ENCODE measurements at regions of chr3 and their contacts with region 1.

Region 1: DNA sequence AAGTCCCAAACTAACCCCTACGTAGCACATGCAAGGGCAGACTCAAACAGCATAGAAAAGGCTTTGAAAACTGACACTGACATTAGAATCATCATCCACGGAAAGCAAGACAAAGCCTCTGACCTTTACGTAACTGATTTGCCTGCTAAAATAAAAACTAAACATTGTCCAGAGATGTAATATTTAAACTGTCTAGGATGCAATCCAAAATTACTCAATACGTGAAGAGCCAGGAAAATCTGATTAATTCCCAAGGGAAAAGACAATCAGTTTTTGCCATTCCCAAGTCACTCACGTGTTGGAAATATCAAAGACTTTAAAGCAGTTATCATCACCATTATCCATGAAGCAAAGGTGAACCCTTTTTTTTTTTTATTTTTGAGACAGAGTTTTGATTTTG is 13.3 kb upstream of the IQCF1 start:
- DNase-seq: no peak
- ATAC-seq: no peak
- H3K4me3 Mint-ChIP-seq: no peak overlapping the region
- H3K27ac Mint-ChIP-seq: no peak overlapping the region
- H3K4me1 Mint-ChIP-seq: no peaks in the 10 kb centered on the region
- H3K27me3 Mint-ChIP-seq: peaks cover 6% of the 10 kb centered on the region

Region 2: DNA sequence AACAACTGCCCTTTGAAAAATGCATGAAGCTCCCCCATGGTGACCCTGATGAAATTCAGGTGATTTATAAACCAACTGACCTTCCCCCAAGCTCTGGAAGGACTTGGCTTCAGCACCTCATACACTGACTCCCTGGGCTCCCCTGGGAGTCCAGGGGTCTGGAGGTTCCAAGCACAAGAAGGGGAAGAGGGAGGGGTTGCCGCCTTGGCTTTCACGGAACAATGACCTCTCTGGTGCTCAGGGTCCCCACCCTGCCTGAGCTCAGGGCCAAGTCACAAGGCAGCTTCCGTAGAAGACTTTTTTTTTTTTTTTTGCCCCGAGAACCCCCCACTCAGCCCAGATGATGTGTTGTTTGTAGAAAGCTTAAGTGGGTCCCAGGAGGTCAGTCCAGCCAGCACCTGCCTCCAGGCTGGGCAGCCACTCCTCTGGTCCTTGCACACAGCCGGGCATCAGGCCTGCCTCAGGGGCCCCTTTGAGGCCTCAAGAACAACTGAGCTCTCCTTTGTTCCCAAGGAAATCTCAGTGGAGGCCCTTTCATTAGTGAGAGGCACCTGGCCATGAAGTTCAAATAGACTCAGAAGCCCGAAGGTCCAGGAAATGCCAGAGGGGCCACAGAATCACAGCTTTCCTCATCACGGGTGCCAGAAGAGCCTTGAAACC is 267.5 kb after region 1 on chr3:
- CTCF ChIA-PET with region 1: no interaction called
- POLR2A ChIA-PET with region 1: interaction called, 12 read pairs
- intact Hi-C with region 1: no loop called
- DNase-seq: no peak
- ATAC-seq: no peak
- H3K4me3 Mint-ChIP-seq: no peak overlapping the region
- H3K27ac Mint-ChIP-seq: no peak overlapping the region
- H3K4me1 Mint-ChIP-seq: no peaks in the 10 kb centered on the region
- H3K27me3 Mint-ChIP-seq: no peaks in the 10 kb centered on the region

Region 3: GRCh38 chr3:53555068-53555588 is 1638.7 kb after region 1 on chr3:
- CTCF ChIA-PET with region 1: no interaction called
- POLR2A ChIA-PET with region 1: no interaction called
- intact Hi-C with region 1: no loop called
- DNase-seq: peak; percentile 70
- ATAC-seq: peak; percentile 92
- H3K4me3 Mint-ChIP-seq: no peak overlapping the region
- H3K27ac Mint-ChIP-seq: peak overlapping the region; percentile 58
- H3K4me1 Mint-ChIP-seq: peaks cover 24% of the 10 kb centered on the region
- H3K27me3 Mint-ChIP-seq: peaks cover 16% of the 10 kb centered on the region